ENCODE measurements at regions of chr11 and their contacts with region 1.

Region 1: DNA sequence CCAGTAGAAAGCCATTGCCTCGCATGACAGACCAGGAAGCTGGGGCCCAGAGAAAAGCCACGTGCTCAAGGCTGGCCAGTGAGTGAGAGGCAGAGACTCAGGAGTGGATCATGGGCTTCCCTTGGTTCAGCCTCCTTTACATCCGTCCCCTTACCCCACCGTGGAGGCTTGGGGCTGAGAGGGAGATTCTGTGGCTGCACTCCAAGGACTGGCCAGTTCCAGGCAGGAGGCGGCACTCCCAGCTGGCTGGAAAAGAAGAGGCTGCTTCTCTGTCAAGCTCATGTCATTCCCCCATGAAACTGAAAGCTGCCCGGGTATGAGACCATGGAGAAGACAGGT is 6.6 kb upstream of the ASCL2 start:
- DNase-seq: no peak
- ATAC-seq: no peak
- H3K4me3 Mint-ChIP-seq: no peak overlapping the region
- H3K27ac Mint-ChIP-seq: no peak overlapping the region
- H3K4me1 Mint-ChIP-seq: peaks cover 16% of the 10 kb centered on the region
- H3K27me3 Mint-ChIP-seq: peaks cover 62% of the 10 kb centered on the region
- CTCF ChIP-seq: no peak

Region 2: DNA sequence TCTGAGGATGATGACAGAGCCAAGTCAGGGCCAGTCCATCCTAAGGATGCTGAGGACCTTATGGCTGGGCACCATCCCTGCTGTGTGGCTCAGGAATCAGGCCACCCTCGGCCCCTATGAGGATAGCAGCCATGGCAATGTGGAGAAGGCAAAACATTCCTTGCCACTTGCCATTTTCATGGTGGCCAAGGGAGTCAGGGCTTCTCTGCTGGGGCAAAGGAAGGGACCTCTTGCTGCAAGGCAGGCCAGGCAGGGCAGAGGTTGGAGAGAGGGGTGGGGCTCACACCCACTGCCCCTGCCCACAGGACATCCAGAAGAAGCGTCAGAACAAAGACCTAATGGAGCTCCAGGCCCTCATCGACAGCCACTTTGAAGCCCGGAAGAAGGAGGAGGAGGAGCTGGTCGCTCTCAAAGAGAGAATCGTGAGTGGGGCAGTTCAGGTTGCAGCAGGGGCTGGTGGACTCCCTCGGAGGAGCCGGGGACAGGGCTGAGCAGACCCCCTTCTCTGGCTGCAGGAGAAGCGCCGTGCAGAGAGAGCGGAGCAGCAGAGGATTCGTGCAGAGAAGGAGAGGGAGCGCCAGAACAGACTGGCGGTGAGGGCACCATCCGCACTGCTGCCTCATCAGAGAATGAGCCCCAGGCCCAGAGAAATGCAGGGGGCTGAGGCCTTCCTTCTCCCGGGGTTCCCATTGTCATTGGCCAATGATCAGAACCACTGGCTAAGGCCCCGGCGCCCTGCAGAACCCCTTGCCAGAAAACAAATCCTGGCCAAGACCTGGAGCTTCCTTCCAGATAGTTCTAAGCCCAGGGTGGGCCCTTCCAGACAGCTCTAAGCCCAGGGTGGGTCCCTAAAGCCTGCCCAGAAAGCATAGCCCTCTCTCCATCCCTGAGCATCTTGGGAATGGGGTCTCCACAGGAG is 343.3 kb before region 1 on chr11:
- CTCF ChIA-PET with region 1: no interaction called
- POLR2A ChIA-PET with region 1: interaction called, 10 read pairs
- DNase-seq: no peak
- ATAC-seq: no peak
- H3K4me3 Mint-ChIP-seq: no peak overlapping the region
- H3K27ac Mint-ChIP-seq: no peak overlapping the region
- H3K4me1 Mint-ChIP-seq: no peaks in the 10 kb centered on the region
- H3K27me3 Mint-ChIP-seq: no peaks in the 10 kb centered on the region; the same call in 1 of the 2 replicates
- CTCF ChIP-seq: no peak

Measured in WTC11 (cell line).